Endothelial cell of umbilical vein (primary cell): ENCODE measurements at regions of chr11 and their contacts with region 1.

Region 1: GRCh38 chr11:25734592-25735211 is 597.2 kb upstream of the ANO3 start:
- DNase-seq: no peak
- H3K4me3 ChIP-seq: no peak overlapping the region
- H3K27ac ChIP-seq: no peak overlapping the region
- H3K4me1 ChIP-seq: no peaks in the 10 kb centered on the region
- H3K27me3 ChIP-seq: no peaks in the 10 kb centered on the region
- CTCF ChIP-seq: peak in 1 of 2 donors; percentile 5
- POLR2A ChIP-seq: no peak

Region 2: DNA sequence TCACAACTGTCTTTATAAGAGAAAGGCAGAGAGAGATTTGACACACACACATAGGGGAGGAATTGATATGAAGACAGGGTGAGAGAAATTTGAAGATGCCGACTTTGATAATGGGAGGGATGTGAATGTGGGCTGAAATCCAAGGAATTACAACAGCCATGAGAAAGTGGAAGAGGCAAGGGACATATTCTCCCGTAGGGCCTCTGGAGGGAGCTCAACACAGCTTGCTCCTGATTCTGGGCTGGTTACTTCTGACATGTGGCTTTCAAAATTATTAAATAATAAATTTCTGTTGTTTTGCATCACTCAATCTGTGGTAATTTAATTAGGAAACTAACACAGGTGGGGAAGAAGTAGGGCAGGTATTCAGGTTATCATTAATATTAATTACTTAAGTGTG is 954.9 kb before region 1 on chr11:
- CTCF ChIA-PET with region 1: no interaction called
- POLR2A ChIA-PET with region 1: no interaction called
- dilution Hi-C with region 1: no loop called
- intact Hi-C with region 1: loop called (anchors 5 kb)
- DNase-seq: peak; percentile 14
- H3K4me3 ChIP-seq: no peak overlapping the region
- H3K27ac ChIP-seq: no peak overlapping the region
- H3K4me1 ChIP-seq: no peaks in the 10 kb centered on the region
- H3K27me3 ChIP-seq: no peaks in the 10 kb centered on the region
- CTCF ChIP-seq: peak in 1 of 2 donors; percentile 37
- POLR2A ChIP-seq: no peak

Region 3: DNA sequence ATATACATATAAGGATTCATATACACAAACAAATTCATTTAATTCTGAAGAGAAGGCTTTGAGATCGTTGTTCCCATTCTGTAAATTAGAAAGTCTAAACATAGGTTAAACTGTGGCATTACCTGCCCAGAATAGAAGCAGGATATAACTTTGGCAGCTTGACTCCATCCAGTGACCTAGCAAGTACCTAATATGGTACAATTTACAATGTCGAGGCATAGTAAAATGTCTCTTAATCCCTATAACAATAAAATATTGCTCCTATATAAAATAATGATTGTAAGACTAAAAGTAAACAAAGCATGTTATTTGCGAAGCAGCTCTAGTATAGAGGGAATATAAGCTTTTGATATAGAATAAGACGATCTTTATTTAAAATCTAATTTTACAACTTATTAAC is 481.8 kb before region 1 on chr11:
- CTCF ChIA-PET with region 1: no interaction called
- POLR2A ChIA-PET with region 1: no interaction called
- dilution Hi-C with region 1: no loop called
- intact Hi-C with region 1: no loop called
- DNase-seq: no peak
- H3K4me3 ChIP-seq: no peak overlapping the region
- H3K27ac ChIP-seq: no peak overlapping the region
- H3K4me1 ChIP-seq: no peaks in the 10 kb centered on the region
- H3K27me3 ChIP-seq: no peaks in the 10 kb centered on the region
- CTCF ChIP-seq: no peak
- POLR2A ChIP-seq: no peak

Region 4: GRCh38 chr11:25863986-25864385 is 129.3 kb after region 1 on chr11:
- CTCF ChIA-PET with region 1: no interaction called
- POLR2A ChIA-PET with region 1: no interaction called
- dilution Hi-C with region 1: no loop called
- intact Hi-C with region 1: no loop called
- DNase-seq: no peak
- H3K4me3 ChIP-seq: no peak overlapping the region
- H3K27ac ChIP-seq: no peak overlapping the region
- H3K4me1 ChIP-seq: peaks cover 2% of the 10 kb centered on the region
- H3K27me3 ChIP-seq: no peaks in the 10 kb centered on the region
- CTCF ChIP-seq: no peak
- POLR2A ChIP-seq: no peak